Esophagus squamous epithelium (tissue), 5 donors: ENCODE measurements at regions of chr2 and their contacts with region 1.

Region 1: DNA sequence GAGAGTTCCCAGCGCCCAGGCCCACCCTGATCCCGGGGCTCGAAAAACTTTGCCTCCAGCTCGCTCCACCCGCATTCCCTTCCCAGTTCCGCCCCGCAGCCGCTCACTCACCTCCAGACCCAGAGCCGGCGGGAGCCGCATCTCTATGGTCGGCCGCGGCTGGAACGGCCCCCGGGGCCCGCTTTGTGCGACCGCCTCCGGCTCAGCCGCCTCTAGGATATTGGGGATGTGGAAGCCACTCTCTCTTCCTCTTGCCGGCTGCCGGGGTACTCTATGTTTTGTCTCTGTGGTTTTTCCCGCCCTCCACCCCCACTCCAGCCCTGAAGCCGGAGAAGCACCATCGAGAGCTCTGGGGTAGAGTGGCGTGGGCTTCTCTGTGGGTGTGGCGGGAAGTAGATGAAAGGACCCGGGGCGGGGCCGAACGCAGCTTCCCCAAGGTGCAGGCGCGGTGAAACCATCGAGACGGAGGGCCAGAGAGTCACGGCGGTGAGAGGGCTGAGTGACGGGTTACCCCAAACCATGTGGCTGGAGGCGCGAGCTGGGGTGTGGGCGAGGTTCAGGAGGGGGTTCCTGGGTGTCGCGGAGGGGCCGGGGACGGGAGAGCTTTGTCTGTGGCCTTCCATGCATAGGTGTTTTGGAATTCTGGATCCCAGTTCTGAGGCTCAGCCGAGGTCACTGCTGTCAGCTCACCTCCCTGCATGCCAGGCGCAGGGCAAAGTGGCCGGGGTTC is at the starts of genes BCS1L and ZNF142:
- DNase-seq: peak; percentile 58
- H3K4me3 ChIP-seq: peak within 1 kb of the TSS; percentile 68 to 93 (median 88)
- H3K27ac ChIP-seq: peak within 1 kb of the TSS; percentile 68 to 89 (median 85)
- H3K4me1 ChIP-seq: peaks cover 10 to 29% (median 17%) of the 10 kb centered on the region in 3 donors
- H3K27me3 ChIP-seq: no peaks in the 10 kb centered on the region
- CTCF ChIP-seq: peak in 1 of 6 experiments; percentile 17
- POLR2A ChIP-seq: peak in 3 of 4 donors; percentile 17 to 58 (median 49)
- total RNA-seq, gene BCS1L: 29.9 to 34.0 (median 30.6) TPM
- total RNA-seq, gene ZNF142: 10.8 to 23.1 (median 20.0) TPM

Region 2: GRCh38 chr2:218269899-218270720 is 389.3 kb before region 1 on chr2 and contains the starts of genes AAMP and PNKD:
- intact Hi-C with region 1: no loop called
- DNase-seq: peak; percentile 99
- H3K4me3 ChIP-seq: peak within 1 kb of the TSS; percentile 71 to 92 (median 74)
- H3K27ac ChIP-seq: peak within 1 kb of the TSS; percentile 84 to 93 (median 88)
- H3K4me1 ChIP-seq: peaks cover 29 to 78% (median 38%) of the 10 kb centered on the region in 3 donors
- H3K27me3 ChIP-seq: no peaks in the 10 kb centered on the region
- CTCF ChIP-seq: peak in 1 of 6 experiments; percentile 46
- POLR2A ChIP-seq: peak in 3 of 4 donors; percentile 39 to 78 (median 60)
- total RNA-seq, gene AAMP: 97.9 to 136 (median 118) TPM
- total RNA-seq, gene PNKD: 19.7 to 34.3 (median 28.0) TPM

Region 3: DNA sequence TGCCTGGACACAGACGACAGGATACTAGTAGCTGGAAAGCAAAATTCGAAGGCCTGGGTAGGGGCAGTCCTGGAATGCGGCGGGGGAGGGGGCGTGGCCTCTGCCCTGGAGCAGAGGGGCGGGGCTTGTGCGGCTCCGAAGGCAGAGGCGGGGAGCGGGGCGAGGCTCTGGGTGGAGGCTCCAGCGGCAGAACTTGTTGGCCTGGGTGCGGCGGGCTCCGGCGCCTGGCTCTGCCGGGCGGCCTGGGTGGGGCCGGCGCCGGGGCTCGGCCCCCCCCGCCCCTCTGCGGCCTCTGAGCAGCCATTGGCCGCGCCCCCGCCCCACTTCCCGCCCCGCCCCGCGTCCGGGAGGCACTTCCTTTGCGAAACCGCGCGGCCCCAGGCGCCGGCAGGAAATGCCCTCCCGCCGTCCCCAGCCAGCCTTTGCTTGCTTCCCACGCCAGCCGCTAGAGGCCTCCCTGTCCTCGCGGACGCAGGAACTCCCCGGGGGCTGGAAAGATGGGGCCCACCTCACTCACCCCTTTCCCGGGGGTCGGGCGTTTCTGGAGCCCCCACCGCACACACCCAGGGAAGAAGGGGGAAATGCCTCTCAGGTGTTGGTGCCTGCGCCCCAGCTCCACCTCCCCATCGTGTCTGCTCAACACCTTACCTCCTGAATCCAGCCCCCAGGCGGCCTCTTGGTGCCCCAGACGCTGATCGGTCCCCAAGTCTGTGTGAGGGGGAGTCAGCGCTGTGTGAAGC is 253.0 kb before region 1 on chr2:
- intact Hi-C with region 1: loop called (anchors 10 kb)
- DNase-seq: peak; percentile 95
- H3K4me3 ChIP-seq: peak overlapping the region; percentile 32 to 68 (median 46)
- H3K27ac ChIP-seq: peak overlapping the region; percentile 87 to 95 (median 89)
- H3K4me1 ChIP-seq: peaks cover 44 to 65% (median 53%) of the 10 kb centered on the region in 3 donors
- H3K27me3 ChIP-seq: no peaks in the 10 kb centered on the region
- CTCF ChIP-seq: peak; percentile 72 to 81 (median 76)
- POLR2A ChIP-seq: peak in 1 of 4 donors; percentile 25

Region 4: DNA sequence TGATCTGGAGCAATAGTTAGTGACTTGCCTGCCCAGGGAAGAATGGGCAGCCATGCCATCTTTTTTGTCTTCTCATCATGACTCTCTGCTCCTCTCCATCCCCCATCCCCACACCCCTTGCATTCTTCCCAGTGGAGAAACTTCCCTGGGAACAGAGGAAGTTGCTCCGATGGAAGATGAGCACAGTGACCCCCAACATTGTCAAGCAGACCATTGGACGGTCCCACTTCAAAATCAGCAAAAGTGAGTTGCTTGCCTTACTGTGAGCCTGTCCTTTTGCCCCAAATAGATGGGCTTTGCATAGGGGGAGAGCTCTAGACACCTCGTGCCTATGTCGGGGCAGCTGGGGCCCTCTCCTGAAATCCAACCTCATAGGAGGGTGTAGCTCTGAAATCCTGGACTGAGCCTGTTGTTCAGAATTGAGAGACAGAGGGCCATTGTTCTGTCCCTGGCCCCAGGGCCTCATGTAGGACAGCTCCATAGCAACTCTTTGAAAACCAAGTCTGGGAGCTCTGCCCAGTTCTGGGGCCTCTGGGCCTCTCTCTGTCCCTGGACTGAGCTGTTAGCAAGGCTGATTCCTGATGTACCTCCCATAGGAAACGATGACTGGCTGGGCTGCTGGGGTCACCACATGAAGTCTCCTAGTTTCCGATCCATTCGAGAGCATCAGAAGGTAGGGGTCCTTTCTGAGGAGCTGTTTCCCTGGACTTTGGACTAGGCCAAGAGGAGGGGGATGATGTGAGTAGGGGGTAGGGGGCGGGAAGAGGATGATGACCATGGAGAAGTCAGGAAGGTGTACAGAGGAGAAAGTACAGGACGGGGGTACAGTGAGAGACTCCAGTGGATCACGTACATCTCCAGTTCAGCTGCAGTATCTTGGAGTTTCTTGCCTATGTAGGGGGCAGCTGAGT is 86.4 kb after region 1 on chr2:
- intact Hi-C with region 1: no loop called
- DNase-seq: no peak
- H3K4me3 ChIP-seq: no peak overlapping the region
- H3K27ac ChIP-seq: peak overlapping the region in 1 of 4 donors; percentile 54
- H3K4me1 ChIP-seq: peaks cover 0 to 3% (median 0%) of the 10 kb centered on the region in 3 donors
- H3K27me3 ChIP-seq: no peaks in the 10 kb centered on the region
- CTCF ChIP-seq: no peak
- POLR2A ChIP-seq: no peak

Region 5: GRCh38 chr2:218756599-218757377 is 97.4 kb after region 1 on chr2:
- intact Hi-C with region 1: no loop called
- DNase-seq: no peak
- H3K4me3 ChIP-seq: no peak overlapping the region
- H3K27ac ChIP-seq: no peak overlapping the region
- H3K4me1 ChIP-seq: peaks cover 0 to 5% (median 0%) of the 10 kb centered on the region in 3 donors
- H3K27me3 ChIP-seq: no peaks in the 10 kb centered on the region
- CTCF ChIP-seq: no peak
- POLR2A ChIP-seq: no peak